ENCODE measurements at regions of chr6 and their contacts with region 1.

Region 1: GRCh38 chr6:87755708-87756671 is 54.0 kb upstream of the AKIRIN2 start:
- DNase-seq: no peak
- H3K4me3 ChIP-seq: no peak overlapping the region
- H3K27me3 ChIP-seq: no peaks in the 10 kb centered on the region
- CTCF ChIP-seq: no peak

Region 2: GRCh38 chr6:87378947-87379346 is 377.0 kb before region 1 on chr6:
- CTCF ChIA-PET with region 1: no interaction called
- POLR2A ChIA-PET with region 1: no interaction called
- DNase-seq: no peak
- H3K4me3 ChIP-seq: no peak overlapping the region
- H3K27me3 ChIP-seq: no peaks in the 10 kb centered on the region
- CTCF ChIP-seq: no peak

Region 3: DNA sequence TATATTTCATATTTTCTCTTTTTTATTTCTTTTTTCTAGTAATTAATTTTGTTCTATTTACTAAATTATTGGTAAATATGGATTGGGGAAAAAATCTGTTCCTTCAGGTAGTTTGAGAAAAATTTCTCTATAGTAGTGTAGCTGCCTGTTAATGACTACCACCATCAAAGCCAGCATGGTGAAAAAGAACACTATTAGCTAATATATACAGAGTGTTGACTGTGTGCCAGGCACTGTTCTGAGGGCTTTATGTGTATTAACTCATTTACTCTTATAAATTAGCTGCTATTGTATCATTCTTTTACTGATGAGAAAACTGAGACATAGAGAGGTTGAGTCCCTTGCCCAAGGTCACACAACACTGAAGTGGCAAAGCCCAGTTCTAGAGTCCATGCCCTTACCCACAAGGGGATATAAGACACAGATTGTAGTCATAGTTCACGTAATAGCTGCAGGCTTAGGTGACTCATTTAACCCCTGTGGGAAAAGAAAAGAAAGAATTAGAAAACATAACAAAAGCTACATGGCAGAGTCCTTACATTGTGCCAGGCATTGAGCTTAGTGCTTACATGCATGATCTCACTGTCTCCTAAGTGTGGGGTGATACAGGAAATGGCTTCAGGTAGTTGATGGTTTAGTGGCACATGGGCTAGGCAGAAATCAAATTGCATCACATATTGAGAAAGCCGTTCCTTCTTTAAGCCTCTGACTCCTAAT is 41.7 kb before region 1 on chr6:
- CTCF ChIA-PET with region 1: no interaction called
- POLR2A ChIA-PET with region 1: interaction called, 10 read pairs
- DNase-seq: no peak
- H3K4me3 ChIP-seq: no peak overlapping the region
- H3K27me3 ChIP-seq: no peaks in the 10 kb centered on the region
- CTCF ChIP-seq: no peak

Region 4: DNA sequence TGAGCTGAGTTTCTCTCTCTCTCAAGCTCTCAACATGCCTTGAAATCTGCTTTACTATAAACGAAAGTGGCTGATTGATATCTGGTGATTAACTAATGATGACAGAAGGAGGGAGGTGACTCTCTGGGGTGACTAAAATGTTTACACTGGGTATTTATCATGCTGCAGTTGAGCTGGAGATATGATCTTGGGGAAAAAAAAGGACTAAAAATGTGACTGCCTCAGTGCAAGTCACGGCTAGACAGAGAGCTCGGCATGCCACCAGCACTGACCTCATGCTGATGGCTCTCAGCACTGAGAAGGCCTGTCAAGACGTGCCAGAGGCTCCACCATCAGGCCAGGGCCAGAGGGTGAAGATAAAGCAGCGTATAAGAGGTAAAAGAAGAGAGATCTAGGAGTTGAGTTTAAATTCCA is 188.6 kb after region 1 on chr6:
- CTCF ChIA-PET with region 1: no interaction called
- POLR2A ChIA-PET with region 1: no interaction called
- DNase-seq: peak; percentile 6
- H3K4me3 ChIP-seq: no peak overlapping the region
- H3K27me3 ChIP-seq: no peaks in the 10 kb centered on the region; the same call in 1 of the 2 replicates
- CTCF ChIP-seq: peak; percentile 16; the same call in 1 of the 2 replicates

Measured in BJ (cell line).